Naive thymus-derived CD8-positive, alpha-beta T cell (primary cell): ENCODE measurements at regions of chr3 and their contacts with region 1.

Region 1: GRCh38 chr3:136861890-136862616 is at the start of gene NCK1:
- DNase-seq: peak; percentile 93 to 99 (median 98)
- ATAC-seq: peak; percentile 95
- H3K4me3 Mint-ChIP-seq: peak within 1 kb of the TSS; percentile 91 to 98 (median 96)
- H3K27ac Mint-ChIP-seq: peak within 1 kb of the TSS; percentile 96 to 99 (median 98)
- H3K4me1 Mint-ChIP-seq: peaks cover 23 to 60% (median 50%) of the 10 kb centered on the region in 4 donors
- H3K27me3 Mint-ChIP-seq: no peaks in the 10 kb centered on the region
- polyA plus RNA-seq, gene NCK1: 36.1 to 44.3 (median 37.7) TPM

Region 2: DNA sequence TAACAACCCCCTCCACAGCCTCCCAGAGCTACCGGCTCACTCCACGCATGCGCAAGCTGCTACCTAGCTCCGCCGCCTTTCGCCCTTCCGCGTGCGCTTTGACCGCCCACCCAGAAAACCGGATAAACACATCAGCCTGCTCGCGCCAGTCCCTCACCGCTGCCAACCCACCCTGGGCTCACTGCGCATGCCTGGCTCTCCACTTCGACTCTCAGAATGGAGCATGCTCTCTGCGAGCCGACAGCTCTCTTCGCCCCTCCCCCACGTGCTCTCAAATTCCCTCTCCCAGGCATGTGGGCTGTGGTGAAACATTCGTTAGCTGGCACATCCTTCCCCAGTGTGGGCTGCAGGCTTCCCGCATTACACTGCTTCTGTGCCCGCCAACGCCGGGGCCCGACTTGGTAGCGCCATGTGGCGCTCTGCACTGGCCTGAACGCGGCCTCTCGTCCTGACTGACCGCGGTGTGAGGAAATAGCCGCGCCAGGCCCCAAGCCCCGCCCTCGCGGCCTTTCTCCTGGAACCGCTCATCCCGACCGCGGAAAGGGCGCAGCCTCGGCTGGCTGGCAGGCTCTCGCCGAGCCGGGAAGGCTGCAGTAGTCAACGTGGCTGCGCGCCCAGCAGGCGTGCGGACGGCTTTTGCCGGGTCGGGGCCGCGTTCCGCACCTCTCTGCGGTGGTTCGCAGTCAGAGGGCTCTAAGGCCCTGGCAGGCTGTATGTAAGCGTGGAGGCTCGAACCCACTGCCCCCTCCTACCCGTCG is 665.5 kb before region 1 on chr3:
- POLR2A ChIA-PET with region 1: interaction called, 50 read pairs
- DNase-seq: peak; percentile 95 to 100 (median 98)
- ATAC-seq: peak; percentile 59 to 66
- H3K4me3 Mint-ChIP-seq: peak overlapping the region; percentile 83 to 100 (median 98)
- H3K27ac Mint-ChIP-seq: peak overlapping the region; percentile 94 to 100 (median 99)
- H3K4me1 Mint-ChIP-seq: peaks cover 28 to 54% (median 36%) of the 10 kb centered on the region in 4 donors
- H3K27me3 Mint-ChIP-seq: peaks cover 0 to 5% (median 0%) of the 10 kb centered on the region in 5 donors

Region 3: GRCh38 chr3:136752422-136753325 is 109.4 kb before region 1 on chr3:
- POLR2A ChIA-PET with region 1: interaction called, 108 read pairs
- DNase-seq: peak; percentile 96 to 99 (median 99)
- ATAC-seq: peak; percentile 81 to 84
- H3K4me3 Mint-ChIP-seq: peak overlapping the region; percentile 92 to 98 (median 94)
- H3K27ac Mint-ChIP-seq: peak overlapping the region; percentile 91 to 99 (median 96)
- H3K4me1 Mint-ChIP-seq: peaks cover 24 to 50% (median 43%) of the 10 kb centered on the region in 4 donors
- H3K27me3 Mint-ChIP-seq: no peaks in the 10 kb centered on the region

Region 4: GRCh38 chr3:136835817-136836510 is 26.1 kb before region 1 on chr3:
- POLR2A ChIA-PET with region 1: no interaction called
- DNase-seq: no peak
- ATAC-seq: no peak
- H3K4me3 Mint-ChIP-seq: no peak overlapping the region
- H3K27ac Mint-ChIP-seq: peak overlapping the region in 3 of 10 donors; percentile 5 to 49 (median 6)
- H3K4me1 Mint-ChIP-seq: peaks cover 0 to 7% (median 4%) of the 10 kb centered on the region in 4 donors
- H3K27me3 Mint-ChIP-seq: peaks cover 2 to 6% (median 4%) of the 10 kb centered on the region in 5 donors

Region 5: DNA sequence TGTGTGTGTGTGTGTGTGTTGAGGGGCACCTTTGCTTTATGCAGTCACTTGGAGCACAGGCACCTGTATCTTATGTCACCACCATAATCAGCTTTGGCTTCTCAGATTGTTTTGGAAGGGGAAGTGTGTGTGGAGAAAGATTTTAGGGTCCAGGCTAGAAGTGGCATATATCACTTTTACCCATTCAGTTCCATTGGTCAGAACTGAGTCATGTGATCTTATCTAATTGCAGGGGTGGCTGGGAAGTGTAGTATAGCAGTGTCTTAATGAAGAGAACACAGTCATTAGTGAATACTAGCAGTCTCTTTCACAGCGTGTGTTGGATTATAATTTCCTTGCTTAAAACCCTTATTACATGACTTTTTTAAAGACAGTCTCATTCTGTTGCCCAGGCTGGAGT is 20.5 kb after region 1 on chr3:
- POLR2A ChIA-PET with region 1: interaction called, 23 read pairs
- DNase-seq: peak in 1 of 10 donors; percentile 23
- ATAC-seq: peak in 1 of 2 donors; percentile 68
- H3K4me3 Mint-ChIP-seq: peak overlapping the region in 3 of 10 donors; percentile 3 to 16 (median 12)
- H3K27ac Mint-ChIP-seq: peak overlapping the region in 6 of 10 donors; percentile 32 to 87 (median 64)
- H3K4me1 Mint-ChIP-seq: peaks cover 37 to 83% (median 78%) of the 10 kb centered on the region in 4 donors
- H3K27me3 Mint-ChIP-seq: no peaks in the 10 kb centered on the region

Region 6: GRCh38 chr3:136889947-136890346 is 27.9 kb after region 1 on chr3:
- POLR2A ChIA-PET with region 1: interaction called, 23 read pairs
- DNase-seq: no peak
- ATAC-seq: no peak
- H3K4me3 Mint-ChIP-seq: no peak overlapping the region
- H3K27ac Mint-ChIP-seq: no peak overlapping the region
- H3K4me1 Mint-ChIP-seq: peaks cover 34 to 86% (median 80%) of the 10 kb centered on the region in 4 donors
- H3K27me3 Mint-ChIP-seq: no peaks in the 10 kb centered on the region

Region 7: GRCh38 chr3:136919799-136920580 is 57.9 kb after region 1 on chr3:
- POLR2A ChIA-PET with region 1: interaction called, 13 read pairs
- DNase-seq: peak in 4 of 10 donors; percentile 16 to 44 (median 44)
- ATAC-seq: peak; percentile 86 to 93
- H3K4me3 Mint-ChIP-seq: peak overlapping the region in 7 of 10 donors; percentile 7 to 67 (median 55)
- H3K27ac Mint-ChIP-seq: peak overlapping the region in 9 of 10 donors; percentile 1 to 93 (median 50)
- H3K4me1 Mint-ChIP-seq: peaks cover 42 to 89% (median 80%) of the 10 kb centered on the region in 4 donors
- H3K27me3 Mint-ChIP-seq: no peaks in the 10 kb centered on the region

Region 8: GRCh38 chr3:137013955-137014688 is 152.1 kb after region 1 on chr3:
- POLR2A ChIA-PET with region 1: interaction called, 19 read pairs
- DNase-seq: peak; percentile 66 to 89 (median 80)
- ATAC-seq: peak; percentile 77 to 96
- H3K4me3 Mint-ChIP-seq: peak overlapping the region; percentile 66 to 87 (median 82)
- H3K27ac Mint-ChIP-seq: peak overlapping the region in 4 of 10 donors; percentile 15 to 58 (median 46)
- H3K4me1 Mint-ChIP-seq: peaks cover 6 to 11% (median 9%) of the 10 kb centered on the region in 4 donors
- H3K27me3 Mint-ChIP-seq: peaks cover 0 to 3% (median 1%) of the 10 kb centered on the region in 5 donors